ENCODE measurements at regions of chr4 and their contacts with region 1.

Region 1: GRCh38 chr4:74228691-74229640 is 71.0 kb downstream of the MTHFD2L start:
- DNase-seq: no peak
- H3K4me3 ChIP-seq: no peak overlapping the region
- H3K27me3 ChIP-seq: no peaks in the 10 kb centered on the region
- CTCF ChIP-seq: peak; percentile 83

Region 2: GRCh38 chr4:74018771-74019170 is 210.2 kb before region 1 on chr4:
- CTCF ChIA-PET with region 1: no interaction called
- POLR2A ChIA-PET with region 1: no interaction called
- DNase-seq: no peak
- H3K4me3 ChIP-seq: no peak overlapping the region
- H3K27me3 ChIP-seq: no peaks in the 10 kb centered on the region
- CTCF ChIP-seq: no peak

Region 3: DNA sequence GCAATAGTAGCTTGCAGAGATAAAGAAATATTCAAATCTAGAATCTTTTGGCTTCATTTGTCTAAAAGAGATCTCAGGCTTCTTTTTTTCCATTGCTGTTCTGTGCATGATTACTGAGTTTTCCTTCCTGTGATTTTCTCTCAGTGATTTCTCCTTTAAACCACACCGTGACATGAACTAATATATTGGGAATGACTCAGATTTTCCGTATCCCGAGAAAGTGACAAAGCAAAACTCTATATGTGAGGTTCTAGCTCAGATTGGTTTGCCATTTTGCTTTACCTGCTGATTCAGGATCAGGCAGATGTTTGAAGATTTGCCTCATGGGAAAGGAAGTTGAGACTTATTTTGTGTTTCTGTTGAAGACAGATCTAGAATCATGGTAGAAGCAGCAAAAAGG is 11.6 kb before region 1 on chr4:
- CTCF ChIA-PET with region 1: interaction called, 18 read pairs
- POLR2A ChIA-PET with region 1: no interaction called
- DNase-seq: no peak
- H3K4me3 ChIP-seq: no peak overlapping the region
- H3K27me3 ChIP-seq: no peaks in the 10 kb centered on the region
- CTCF ChIP-seq: no peak

Region 4: DNA sequence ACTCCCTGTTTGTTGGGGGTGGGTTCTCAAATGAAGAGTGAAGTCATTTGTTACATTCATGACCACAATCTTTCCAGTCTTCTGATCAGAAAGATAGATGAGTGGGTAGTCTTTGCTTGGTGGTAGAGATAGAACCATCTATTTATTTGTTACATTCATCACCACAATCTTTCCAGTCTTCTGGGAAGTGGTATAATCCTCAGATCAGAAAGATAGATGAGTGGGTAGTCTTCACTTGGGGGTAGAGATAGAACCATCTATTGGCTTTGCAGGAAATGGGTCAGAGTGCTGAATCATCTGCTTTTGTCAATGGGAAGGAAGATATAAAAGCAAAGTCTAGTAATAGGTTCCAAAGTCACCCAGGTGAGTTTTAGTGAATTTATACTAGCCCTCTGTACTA is 15.1 kb after region 1 on chr4:
- CTCF ChIA-PET with region 1: interaction called, 10 read pairs
- POLR2A ChIA-PET with region 1: no interaction called
- DNase-seq: no peak
- H3K4me3 ChIP-seq: no peak overlapping the region
- H3K27me3 ChIP-seq: no peaks in the 10 kb centered on the region
- CTCF ChIP-seq: no peak

Region 5: DNA sequence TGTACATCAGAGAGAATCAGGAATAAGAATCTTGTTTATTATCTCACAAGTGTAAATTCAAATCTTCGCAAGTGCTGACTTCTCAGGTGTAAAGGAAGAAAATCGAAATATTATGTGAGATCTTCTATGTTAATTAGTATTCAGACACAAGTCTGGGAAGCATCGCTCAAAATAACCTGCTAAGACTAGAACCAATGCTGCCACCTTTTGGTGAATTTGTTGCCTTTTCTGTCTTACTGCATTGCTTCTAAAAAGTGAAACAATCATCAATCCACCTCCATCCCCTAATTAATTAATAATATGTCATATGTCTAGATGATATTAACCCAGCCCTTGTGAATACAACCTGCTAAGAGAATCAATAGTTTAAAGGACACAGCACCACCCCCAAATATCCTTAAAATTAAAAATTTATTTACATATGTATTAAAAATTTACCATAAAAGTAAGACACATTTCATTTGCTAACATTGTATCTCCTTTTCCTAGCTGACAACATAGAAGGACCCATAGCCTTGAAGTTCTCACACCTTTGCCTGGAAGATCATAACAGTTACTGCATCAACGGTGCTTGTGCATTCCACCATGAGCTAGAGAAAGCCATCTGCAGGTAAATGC is 82.8 kb after region 1 on chr4:
- CTCF ChIA-PET with region 1: interaction called, 23 read pairs
- POLR2A ChIA-PET with region 1: no interaction called
- DNase-seq: no peak
- H3K4me3 ChIP-seq: no peak overlapping the region
- H3K27me3 ChIP-seq: no peaks in the 10 kb centered on the region
- CTCF ChIP-seq: peak; percentile 69

Measured in BJ (cell line).